Activated naive CD4-positive, alpha-beta T cell treated with anti-CD3 and anti-CD28 coated beads for 36 hours (primary cell): ENCODE measurements at regions of chr6 and their contacts with region 1.

Region 1: DNA sequence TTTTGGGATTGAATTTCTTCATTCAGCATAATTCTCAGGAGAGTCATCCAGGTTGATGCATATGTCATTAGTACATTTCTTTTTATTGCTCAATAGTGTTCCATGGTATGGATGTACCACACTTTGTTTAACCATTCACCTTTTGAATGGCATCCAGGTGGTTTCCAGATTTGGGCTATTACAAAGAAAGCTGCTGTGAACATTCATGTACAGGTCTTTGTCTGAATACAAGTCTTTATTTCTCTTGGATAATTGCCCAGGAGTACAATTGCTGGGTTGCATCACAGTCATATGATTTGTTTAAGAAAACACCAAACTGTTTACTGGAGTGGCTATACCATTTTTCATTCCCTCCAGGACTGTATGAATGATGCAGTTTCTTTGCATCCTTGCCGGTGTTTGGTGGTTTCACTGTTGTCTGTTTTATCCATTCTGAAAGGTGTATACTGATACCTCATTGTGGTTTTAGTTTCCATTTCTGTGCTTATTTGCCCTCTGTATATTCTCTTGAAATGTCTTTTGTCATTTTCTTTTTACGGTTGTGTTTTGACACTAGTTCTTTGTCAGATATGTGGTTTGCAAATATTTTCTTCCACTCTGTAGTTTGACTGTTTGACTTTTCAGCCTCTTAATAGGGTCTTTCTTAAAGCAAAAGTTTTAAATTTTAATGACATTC is 8.8 kb downstream of the CDKAL1 start:
- DNase-seq: peak; percentile 63
- H3K4me3 Mint-ChIP-seq: no peak overlapping the region
- H3K27ac Mint-ChIP-seq: peak overlapping the region; percentile 60
- H3K4me1 Mint-ChIP-seq: peaks cover 50% of the 10 kb centered on the region
- H3K27me3 Mint-ChIP-seq: no peaks in the 10 kb centered on the region

Region 2: DNA sequence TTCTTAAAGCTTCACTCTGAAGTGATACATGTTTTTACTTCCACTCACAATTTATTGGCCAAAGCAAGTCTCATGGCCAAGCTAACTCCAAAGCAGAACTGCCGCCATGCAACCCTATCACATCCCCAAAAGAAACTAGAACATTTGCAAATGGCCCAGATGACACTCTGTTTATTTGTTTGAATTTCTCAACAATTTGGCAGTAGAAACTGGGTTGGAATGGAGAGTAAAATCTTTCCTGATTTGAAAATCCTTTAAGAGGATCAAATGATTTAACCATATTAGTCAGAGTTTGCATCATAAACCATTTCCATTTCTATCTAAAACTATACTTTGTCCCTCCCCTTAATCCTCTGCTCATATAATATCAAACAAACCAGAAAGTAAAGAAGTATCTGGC is 180.4 kb before region 1 on chr6:
- CTCF ChIA-PET with region 1: no interaction called
- intact Hi-C with region 1: no loop called
- DNase-seq: no peak
- H3K4me3 Mint-ChIP-seq: no peak overlapping the region
- H3K27ac Mint-ChIP-seq: no peak overlapping the region
- H3K4me1 Mint-ChIP-seq: peaks cover 28% of the 10 kb centered on the region
- H3K27me3 Mint-ChIP-seq: no peaks in the 10 kb centered on the region

Region 3: GRCh38 chr6:20479060-20479459 is 64.0 kb before region 1 on chr6:
- CTCF ChIA-PET with region 1: no interaction called
- intact Hi-C with region 1: no loop called
- DNase-seq: no peak
- H3K4me3 Mint-ChIP-seq: no peak overlapping the region
- H3K27ac Mint-ChIP-seq: no peak overlapping the region
- H3K4me1 Mint-ChIP-seq: no peaks in the 10 kb centered on the region
- H3K27me3 Mint-ChIP-seq: no peaks in the 10 kb centered on the region

Region 4: DNA sequence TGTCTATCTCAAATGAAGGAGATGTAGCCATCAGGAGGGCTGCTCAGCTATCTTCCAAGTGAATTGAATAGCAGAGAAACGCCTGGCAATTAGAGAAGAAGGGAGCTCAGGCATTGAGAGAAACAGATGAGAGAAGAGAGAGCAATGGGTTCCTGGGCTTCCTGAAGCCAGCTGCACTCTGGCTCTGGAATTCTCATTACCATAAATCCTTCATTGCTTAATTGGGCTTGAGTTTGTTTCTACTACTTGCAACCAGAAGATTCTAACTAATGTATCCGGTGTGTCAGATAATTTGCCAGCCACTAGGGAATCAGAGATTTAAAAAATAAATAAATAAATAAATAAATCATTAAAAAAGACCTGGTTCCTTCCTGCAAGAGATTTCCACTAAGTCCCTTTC is 33.9 kb before region 1 on chr6:
- CTCF ChIA-PET with region 1: no interaction called
- intact Hi-C with region 1: loop called (anchors 1 kb)
- DNase-seq: no peak
- H3K4me3 Mint-ChIP-seq: no peak overlapping the region
- H3K27ac Mint-ChIP-seq: no peak overlapping the region
- H3K4me1 Mint-ChIP-seq: no peaks in the 10 kb centered on the region
- H3K27me3 Mint-ChIP-seq: peaks cover 2% of the 10 kb centered on the region

Region 5: GRCh38 chr6:20599302-20600051 is 56.4 kb after region 1 on chr6:
- CTCF ChIA-PET with region 1: interaction called, 3 read pairs
- intact Hi-C with region 1: loop called (anchors 1 kb)
- DNase-seq: no peak
- H3K4me3 Mint-ChIP-seq: no peak overlapping the region
- H3K27ac Mint-ChIP-seq: no peak overlapping the region
- H3K4me1 Mint-ChIP-seq: peaks cover 9% of the 10 kb centered on the region
- H3K27me3 Mint-ChIP-seq: no peaks in the 10 kb centered on the region

Region 6: GRCh38 chr6:20708367-20709124 is 165.5 kb after region 1 on chr6:
- CTCF ChIA-PET with region 1: no interaction called
- intact Hi-C with region 1: loop called (anchors 1 kb)
- DNase-seq: peak; percentile 62
- H3K4me3 Mint-ChIP-seq: no peak overlapping the region
- H3K27ac Mint-ChIP-seq: no peak overlapping the region
- H3K4me1 Mint-ChIP-seq: peaks cover 54% of the 10 kb centered on the region
- H3K27me3 Mint-ChIP-seq: no peaks in the 10 kb centered on the region

Region 7: DNA sequence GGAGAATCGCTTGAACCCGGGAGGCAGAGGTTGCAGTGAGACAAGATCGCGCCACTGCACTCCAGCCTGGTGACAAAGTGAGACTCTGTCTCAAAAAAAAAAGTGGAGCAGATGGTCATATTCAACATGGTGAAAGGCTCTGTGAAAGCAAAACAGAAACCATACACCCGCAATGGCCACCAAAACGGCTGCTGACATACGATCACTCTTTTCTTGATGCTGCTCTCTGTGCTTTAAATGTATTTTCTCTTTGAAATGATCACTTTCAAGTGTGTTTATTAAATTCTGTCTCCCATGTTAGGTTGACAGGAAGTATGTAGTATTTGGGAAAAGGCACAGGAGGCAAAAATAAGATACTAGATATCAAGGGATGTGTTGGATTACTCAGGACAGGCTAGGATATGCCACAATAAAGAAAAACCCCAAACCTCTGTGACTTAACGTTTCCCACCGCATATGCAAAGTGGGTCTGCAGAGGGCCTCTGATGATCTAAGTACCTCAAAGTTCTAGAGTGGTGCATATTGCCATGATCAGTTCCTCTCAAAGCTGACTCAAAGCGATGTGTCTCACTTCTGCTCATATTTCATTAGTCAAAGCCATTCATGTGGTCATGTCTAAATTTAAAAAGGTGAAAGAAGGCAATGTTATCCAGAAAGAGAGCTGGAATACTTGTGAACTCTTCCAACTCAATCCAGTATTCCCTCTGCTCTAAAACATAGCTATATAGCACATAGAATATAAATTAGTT is 895.3 kb after region 1 on chr6:
- CTCF ChIA-PET with region 1: no interaction called
- intact Hi-C with region 1: loop called (anchors 1 kb)
- DNase-seq: peak; percentile 68
- H3K4me3 Mint-ChIP-seq: no peak overlapping the region
- H3K27ac Mint-ChIP-seq: no peak overlapping the region
- H3K4me1 Mint-ChIP-seq: peaks cover 15% of the 10 kb centered on the region
- H3K27me3 Mint-ChIP-seq: peaks cover 5% of the 10 kb centered on the region